ENCODE measurements at regions of chr14 and their contacts with region 1.

Region 1: GRCh38 chr14:101707068-101707842 is 54.3 kb upstream of the PPP2R5C start:
- DNase-seq: peak; percentile 68 to 81
- ATAC-seq: peak; percentile 62 to 82
- H3K4me3 ChIP-seq: no peak overlapping the region
- H3K27ac ChIP-seq: peak overlapping the region; percentile 61 to 75
- H3K4me1 ChIP-seq: 0 out of 3 replicates have a peak, but pooled peaks cover 3% of the 10 kb centered on the region
- CTCF ChIP-seq: peak; percentile 91
- EP300 ChIP-seq: no peak
- POLR2A ChIP-seq: no peak
- RAD21 ChIP-seq: peak; percentile 94 to 96

Region 2: GRCh38 chr14:101695659-101696058 is 11.6 kb before region 1 on chr14:
- CTCF ChIA-PET with region 1: interaction called, 11 read pairs
- POLR2A ChIA-PET with region 1: no interaction called
- DNase-seq: no peak
- ATAC-seq: no peak
- H3K4me3 ChIP-seq: no peak overlapping the region
- H3K27ac ChIP-seq: no peak overlapping the region
- H3K4me1 ChIP-seq: no peaks in the 10 kb centered on the region
- CTCF ChIP-seq: no peak
- EP300 ChIP-seq: no peak
- POLR2A ChIP-seq: no peak
- RAD21 ChIP-seq: no peak

Region 3: GRCh38 chr14:101721951-101722661 is 14.9 kb after region 1 on chr14:
- CTCF ChIA-PET with region 1: interaction called, 64 read pairs
- POLR2A ChIA-PET with region 1: no interaction called
- DNase-seq: peak in 1 of 2 experiments; percentile 65
- ATAC-seq: peak in 1 of 2 experiments; percentile 66; a peak in 3 of 6 replicates
- H3K4me3 ChIP-seq: no peak overlapping the region
- H3K27ac ChIP-seq: peak overlapping the region in 1 of 2 experiments; percentile 60; a peak in 3 of 6 replicates
- H3K4me1 ChIP-seq: no peaks in the 10 kb centered on the region
- CTCF ChIP-seq: no peak
- EP300 ChIP-seq: no peak
- POLR2A ChIP-seq: no peak
- RAD21 ChIP-seq: no peak

Region 4: GRCh38 chr14:101761032-101761880 is 54.0 kb after region 1 on chr14 and contains the start of gene PPP2R5C:
- CTCF ChIA-PET with region 1: interaction called, 11 read pairs
- POLR2A ChIA-PET with region 1: interaction called, 3 read pairs
- DNase-seq: peak; percentile 91 to 95
- ATAC-seq: peak; percentile 81 to 94
- H3K4me3 ChIP-seq: peak within 1 kb of the TSS; percentile 82
- H3K27ac ChIP-seq: peak within 1 kb of the TSS; percentile 77 to 93
- H3K4me1 ChIP-seq: peaks cover 8% of the 10 kb centered on the region; the same call in 1 of the 3 replicates
- CTCF ChIP-seq: no peak
- EP300 ChIP-seq: no peak
- POLR2A ChIP-seq: peak; percentile 43
- RAD21 ChIP-seq: no peak
- polyA plus RNA-seq, gene PPP2R5C: 133 and 150 TPM in 2 replicates

Region 5: DNA sequence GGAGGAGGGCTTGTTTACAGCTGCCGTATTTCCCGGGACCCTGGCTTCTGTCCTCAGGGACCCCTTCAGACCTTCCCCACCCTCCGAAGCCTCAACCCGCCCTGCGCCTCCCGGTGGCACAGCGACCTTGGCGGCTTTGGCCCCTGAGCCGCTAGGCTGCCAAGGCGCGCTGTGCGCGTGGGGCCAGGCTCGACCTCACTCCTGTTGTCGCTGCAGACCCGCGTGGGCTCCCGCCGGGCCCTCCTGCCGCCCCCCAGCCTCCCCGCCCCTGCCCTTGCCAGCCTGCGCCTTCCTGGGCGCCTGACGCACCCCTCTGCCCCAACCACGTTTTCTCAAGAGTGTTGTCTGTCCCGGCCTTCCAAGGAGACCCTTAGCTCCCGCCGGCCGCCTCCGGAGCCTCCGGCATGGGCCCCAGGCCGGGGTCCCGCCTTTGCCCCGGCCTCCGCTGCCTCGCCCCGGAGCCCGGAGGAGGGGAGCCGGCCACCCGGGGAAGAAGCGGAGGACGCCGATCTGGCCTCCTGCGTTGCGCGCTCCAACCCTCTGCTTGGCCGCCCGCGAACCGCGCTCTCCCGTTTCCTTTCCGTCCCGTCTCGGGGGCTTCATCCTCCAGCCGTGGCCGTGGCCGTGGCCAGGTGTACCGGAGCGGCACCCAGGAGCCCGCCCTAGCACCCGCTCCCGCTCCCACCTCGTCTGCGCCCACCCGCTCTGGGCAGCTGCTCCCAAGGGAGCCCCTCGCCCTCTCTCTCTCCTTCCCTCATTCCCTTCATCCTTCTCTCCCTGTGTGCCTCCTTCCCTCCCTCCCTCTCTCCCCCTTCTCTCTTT is 74.2 kb after region 1 on chr14:
- CTCF ChIA-PET with region 1: interaction called, 11 read pairs
- POLR2A ChIA-PET with region 1: no interaction called
- DNase-seq: no peak
- ATAC-seq: peak; percentile 14 to 59; a peak in 3 of 6 replicates
- H3K4me3 ChIP-seq: peak overlapping the region; percentile 35
- H3K27ac ChIP-seq: peak overlapping the region; percentile 24 to 65; a peak in 3 of 6 replicates
- H3K4me1 ChIP-seq: no peaks in the 10 kb centered on the region
- CTCF ChIP-seq: no peak
- EP300 ChIP-seq: no peak
- POLR2A ChIP-seq: no peak
- RAD21 ChIP-seq: no peak

Region 6: DNA sequence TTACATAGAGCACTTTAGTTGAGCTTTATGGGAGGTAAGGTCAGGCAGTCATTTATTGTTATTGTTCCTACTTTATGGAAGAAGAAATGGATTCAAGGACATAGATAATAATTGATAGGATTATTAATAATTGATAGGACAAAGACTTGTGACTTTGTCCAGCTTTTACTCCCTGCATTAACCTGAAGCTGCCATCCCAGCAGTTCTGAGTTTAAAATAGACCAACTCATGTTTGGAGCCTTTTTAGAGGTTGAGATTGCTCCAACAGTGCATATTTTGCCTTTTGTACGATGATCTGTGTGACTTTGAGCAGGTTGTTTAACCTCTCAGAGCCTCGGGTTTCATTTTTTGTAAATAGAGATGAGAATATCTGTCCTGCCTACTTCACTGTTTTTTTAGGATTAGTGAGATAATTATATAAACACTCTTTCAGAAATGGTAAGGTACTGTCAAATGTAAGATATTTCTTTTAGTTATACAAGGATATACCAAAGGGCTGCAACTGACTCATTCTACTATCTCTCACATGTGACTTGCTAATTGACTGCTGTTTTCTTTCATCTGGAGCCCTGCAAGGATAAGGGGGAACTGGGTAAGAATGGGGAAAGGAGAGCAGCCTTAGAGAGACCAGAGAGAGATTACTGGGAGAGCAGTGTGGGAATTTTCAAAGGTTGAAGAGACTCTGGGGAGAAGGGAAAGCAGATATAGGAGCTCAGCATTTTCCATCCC is 447.7 kb after region 1 on chr14:
- CTCF ChIA-PET with region 1: no interaction called
- POLR2A ChIA-PET with region 1: no interaction called
- DNase-seq: no peak
- ATAC-seq: no peak
- H3K4me3 ChIP-seq: no peak overlapping the region
- H3K27ac ChIP-seq: peak overlapping the region in 1 of 2 experiments; percentile 6; a peak in 1 of 6 replicates
- H3K4me1 ChIP-seq: peaks cover 18% of the 10 kb centered on the region
- CTCF ChIP-seq: no peak
- EP300 ChIP-seq: no peak
- POLR2A ChIP-seq: no peak
- RAD21 ChIP-seq: no peak

Measured in A549 (cell line).